ENCODE measurements at regions of chr6 and their contacts with region 1.

Region 1: DNA sequence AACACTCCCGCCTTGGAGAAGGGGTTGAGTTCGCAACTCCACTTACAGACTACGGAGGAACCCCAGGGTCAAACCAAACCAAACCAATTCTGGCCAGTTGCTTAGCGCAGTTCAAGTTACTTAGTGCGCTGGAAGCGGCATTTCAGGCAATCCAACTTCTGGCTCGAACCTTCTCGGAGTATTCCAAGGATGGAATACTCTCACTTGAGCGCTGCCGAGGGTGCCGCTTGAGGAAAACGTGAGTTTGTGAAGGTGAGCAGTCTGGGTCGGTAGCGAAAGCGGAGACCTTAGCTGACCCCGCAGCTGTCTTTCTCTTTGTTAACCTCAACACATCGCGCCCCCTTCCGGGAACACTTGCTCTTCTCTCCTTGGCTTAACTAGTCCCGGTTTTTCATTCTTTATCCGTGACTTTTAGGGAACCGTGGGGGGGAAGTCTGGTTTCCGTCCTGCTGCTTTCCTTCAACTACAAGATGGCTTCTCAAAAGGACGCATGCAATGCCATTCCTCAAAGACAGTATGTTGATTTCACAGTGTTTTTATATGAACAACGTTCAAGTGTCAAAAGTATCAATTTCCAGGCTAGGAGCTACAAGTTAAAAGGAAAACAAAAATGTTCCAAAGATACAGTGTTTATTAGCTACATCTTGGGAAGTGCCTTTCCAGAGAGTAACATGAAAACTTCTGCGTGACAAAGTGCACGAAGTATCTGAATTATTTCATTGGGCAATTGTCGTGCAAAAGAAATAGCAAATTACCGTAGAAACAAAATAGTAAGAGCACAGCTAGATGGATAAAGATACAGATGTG is 742 bp upstream of the PNISR start:
- DNase-seq: peak; percentile 70 to 79
- H3K4me3 ChIP-seq: peak overlapping the region; percentile 88
- H3K27ac ChIP-seq: peak overlapping the region; percentile 94
- H3K4me1 ChIP-seq: peaks cover 31% of the 10 kb centered on the region
- H3K27me3 ChIP-seq: no peaks in the 10 kb centered on the region
- CTCF ChIP-seq: peak; percentile 66; the same call in 1 of the 2 replicates

Region 2: DNA sequence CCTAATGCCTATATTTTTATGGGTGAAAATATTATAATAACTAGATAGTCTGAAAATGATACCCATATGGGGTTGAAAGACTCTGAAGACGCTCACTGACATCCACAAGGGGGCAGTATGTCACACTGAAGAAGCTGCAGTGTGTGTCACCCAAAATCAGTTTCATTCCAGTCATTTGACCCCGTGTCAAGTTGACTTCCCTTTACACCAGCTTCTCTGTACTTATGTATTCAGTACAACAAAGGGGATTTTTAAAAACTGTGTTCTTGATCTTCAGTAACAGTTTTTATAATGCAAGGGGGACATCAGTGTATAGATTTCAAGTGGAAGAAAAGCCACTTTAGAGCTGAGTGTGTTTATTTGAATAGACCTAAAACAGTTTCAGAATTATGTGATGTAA is 95.7 kb before region 1 on chr6:
- CTCF ChIA-PET with region 1: interaction called, 5 read pairs
- POLR2A ChIA-PET with region 1: no interaction called
- intact Hi-C with region 1: loop called (anchors 2 kb)
- DNase-seq: peak; percentile 31 to 59
- H3K4me3 ChIP-seq: no peak overlapping the region
- H3K27ac ChIP-seq: no peak overlapping the region
- H3K4me1 ChIP-seq: no peaks in the 10 kb centered on the region
- H3K27me3 ChIP-seq: no peaks in the 10 kb centered on the region
- CTCF ChIP-seq: peak; percentile 89

Region 3: DNA sequence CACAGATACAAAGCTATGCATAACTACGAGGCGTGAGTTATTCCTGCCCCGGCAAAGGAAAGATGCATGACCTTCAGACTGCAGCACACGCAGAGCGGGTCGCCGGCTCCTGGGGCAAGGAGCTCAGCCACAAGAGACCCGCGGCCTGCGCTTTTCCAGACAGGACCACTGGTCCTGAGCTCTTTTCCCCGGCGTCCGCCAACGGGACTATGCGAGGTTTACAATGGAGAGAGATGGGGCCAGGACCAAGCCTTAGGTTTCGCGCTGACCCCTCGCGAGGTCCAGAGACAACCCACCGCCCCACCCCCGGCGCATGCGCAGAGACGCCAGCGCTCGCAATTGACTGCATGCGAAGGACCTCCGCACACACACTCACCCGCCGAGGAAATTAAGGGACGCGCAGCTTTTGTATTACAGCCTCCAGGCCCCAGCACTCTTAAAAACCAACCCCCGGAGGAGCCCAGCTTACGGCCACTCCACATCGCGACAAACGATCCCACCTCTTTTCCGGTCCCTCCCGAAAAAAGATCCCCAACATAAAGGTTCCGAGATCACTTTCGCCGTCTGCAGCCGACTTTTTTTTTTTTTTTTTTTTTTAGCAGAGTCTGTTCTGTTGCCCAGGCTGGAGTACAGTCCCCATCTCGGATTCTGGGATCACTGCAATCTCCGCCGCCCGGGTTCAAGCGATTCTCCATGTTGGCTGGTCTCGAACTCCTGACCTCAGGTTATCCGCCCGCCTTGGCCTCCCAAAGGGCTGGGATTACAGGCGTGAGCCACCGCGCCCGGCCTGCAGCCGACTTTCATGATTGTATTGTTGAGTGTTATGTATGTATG is 31.9 kb before region 1 on chr6 and contains the start of gene COQ3:
- CTCF ChIA-PET with region 1: no interaction called
- POLR2A ChIA-PET with region 1: interaction called, 47 read pairs
- intact Hi-C with region 1: loop called (anchors 1 kb)
- DNase-seq: peak; percentile 70 to 73
- H3K4me3 ChIP-seq: peak within 1 kb of the TSS; percentile 96
- H3K27ac ChIP-seq: peak within 1 kb of the TSS; percentile 76
- H3K4me1 ChIP-seq: peaks cover 10% of the 10 kb centered on the region; the same call in 1 of the 2 replicates
- H3K27me3 ChIP-seq: no peaks in the 10 kb centered on the region
- CTCF ChIP-seq: no peak
- total RNA-seq, gene COQ3: 10.9 and 14.4 TPM in 2 replicates

Region 4: DNA sequence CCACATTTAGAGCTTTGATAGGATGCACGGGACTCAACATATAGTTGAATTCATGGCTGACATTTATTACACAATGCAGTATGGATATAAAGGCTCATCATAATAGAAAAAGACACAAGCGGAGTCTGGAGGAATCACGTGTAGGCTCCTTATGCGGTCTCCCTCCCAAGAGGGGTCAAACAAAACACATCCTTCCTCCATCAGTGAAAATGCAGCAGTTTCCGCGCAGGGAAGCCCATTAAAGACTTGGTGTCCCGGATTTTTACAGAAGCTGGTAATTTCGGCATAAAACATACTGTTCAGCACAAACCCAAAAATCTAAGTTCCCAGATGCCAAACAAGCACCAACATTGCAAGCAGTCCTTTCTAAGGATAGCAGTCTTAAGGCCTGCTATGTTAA is 88.2 kb after region 1 on chr6:
- CTCF ChIA-PET with region 1: no interaction called
- POLR2A ChIA-PET with region 1: no interaction called
- intact Hi-C with region 1: loop called (anchors 2 kb)
- DNase-seq: no peak
- H3K4me3 ChIP-seq: peak overlapping the region; percentile 66
- H3K27ac ChIP-seq: no peak overlapping the region
- H3K4me1 ChIP-seq: peaks cover 21% of the 10 kb centered on the region
- H3K27me3 ChIP-seq: no peaks in the 10 kb centered on the region
- CTCF ChIP-seq: no peak